Gastrocnemius medialis (tissue), 4 donors: ENCODE measurements at regions of chr10 and their contacts with region 1.

Region 1: GRCh38 chr10:70363971-70364771 is 18.3 kb downstream of the LRRC20 start:
- DNase-seq: peak; percentile 93 to 95
- ATAC-seq: peak; percentile 98 to 99
- H3K4me3 ChIP-seq: peak overlapping the region; percentile 9 to 38 (median 24)
- H3K27ac ChIP-seq: peak overlapping the region; percentile 86 to 91 (median 90)
- H3K4me1 ChIP-seq: peaks cover 12 to 15% of the 10 kb centered on the region in 2 donors
- H3K27me3 ChIP-seq: no peaks in the 10 kb centered on the region
- CTCF ChIP-seq: peak; percentile 93 to 98 (median 95)
- POLR2A ChIP-seq: peak in 1 of 2 donors; percentile 30

Region 2: DNA sequence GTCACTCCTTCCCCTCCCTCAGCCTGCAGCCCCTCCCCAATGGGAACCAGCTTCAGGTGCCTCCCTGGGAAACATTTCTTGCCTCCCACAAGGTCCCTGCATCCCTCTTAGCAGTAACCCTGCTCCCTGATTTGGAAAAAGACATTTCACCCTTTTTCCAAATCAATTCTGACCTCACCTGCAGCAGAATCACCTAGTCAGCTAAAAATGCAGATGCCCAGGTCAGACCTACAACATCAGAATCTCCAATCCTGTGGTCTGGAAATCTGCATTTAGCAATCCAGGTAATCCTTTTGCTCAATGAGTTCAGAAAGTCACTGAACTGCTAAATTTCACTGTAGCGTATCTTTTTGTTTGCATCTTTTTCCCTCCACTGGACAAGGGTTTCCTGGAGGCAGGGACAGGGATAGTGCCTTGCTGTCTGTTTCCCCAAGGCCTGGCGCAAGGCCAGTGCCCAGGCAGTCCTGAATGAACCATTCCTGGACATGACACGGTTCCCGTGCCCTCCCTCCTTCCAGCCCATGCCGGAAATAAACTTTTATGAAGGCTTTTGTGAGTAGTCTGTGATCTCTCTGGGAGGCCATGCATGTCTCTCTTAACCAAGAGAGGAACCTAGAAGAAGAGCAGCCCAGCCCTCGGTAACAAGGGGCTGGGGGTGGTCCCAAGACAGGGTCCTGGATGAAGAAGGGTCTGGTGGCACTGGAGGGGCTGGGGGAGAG is 518.4 kb before region 1 on chr10:
- in situ Hi-C with region 1: no loop called
- intact Hi-C with region 1: no loop called
- DNase-seq: peak; percentile 71 to 79
- ATAC-seq: peak; percentile 83 to 85
- H3K4me3 ChIP-seq: peak overlapping the region in 2 of 4 donors; percentile 1 to 40
- H3K27ac ChIP-seq: peak overlapping the region; percentile 81 to 91 (median 84)
- H3K4me1 ChIP-seq: peaks cover 34 to 35% of the 10 kb centered on the region in 2 donors
- H3K27me3 ChIP-seq: no peaks in the 10 kb centered on the region
- CTCF ChIP-seq: no peak
- POLR2A ChIP-seq: no peak

Region 3: GRCh38 chr10:70191972-70192305 is 172.2 kb before region 1 on chr10:
- in situ Hi-C with region 1: no loop called
- intact Hi-C with region 1: no loop called
- DNase-seq: no peak
- ATAC-seq: peak in 1 of 2 donors; percentile 33
- H3K4me3 ChIP-seq: no peak overlapping the region
- H3K27ac ChIP-seq: no peak overlapping the region
- H3K4me1 ChIP-seq: peaks cover 0 to 5% of the 10 kb centered on the region in 2 donors
- H3K27me3 ChIP-seq: no peaks in the 10 kb centered on the region
- CTCF ChIP-seq: no peak
- POLR2A ChIP-seq: no peak

Region 4: DNA sequence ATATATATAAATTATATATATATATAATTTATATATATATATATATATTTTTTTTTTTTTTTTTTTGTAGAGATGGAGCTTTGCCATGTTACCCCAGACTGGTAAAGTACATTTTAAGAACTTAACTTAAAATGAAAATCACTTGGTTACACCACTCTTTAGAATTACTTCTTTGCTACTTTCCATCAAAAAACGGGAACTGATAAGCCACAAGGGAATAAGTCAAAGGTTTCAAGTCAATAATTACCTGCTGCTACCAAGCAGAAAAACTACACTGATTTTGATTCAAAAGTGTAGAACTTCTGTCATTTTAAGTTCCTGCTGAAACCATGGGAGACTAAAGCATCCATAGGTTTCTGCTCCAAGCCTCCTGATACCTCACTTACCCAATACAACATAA is 143.1 kb before region 1 on chr10:
- in situ Hi-C with region 1: loop called (anchors 5 kb)
- intact Hi-C with region 1: loop called (anchors 1 kb)
- DNase-seq: no peak
- ATAC-seq: no peak
- H3K4me3 ChIP-seq: peak overlapping the region in 2 of 4 donors; percentile 8 to 26
- H3K27ac ChIP-seq: peak overlapping the region; percentile 20 to 64 (median 57)
- H3K4me1 ChIP-seq: peaks cover 0 to 9% of the 10 kb centered on the region in 2 donors
- H3K27me3 ChIP-seq: no peaks in the 10 kb centered on the region
- CTCF ChIP-seq: no peak
- POLR2A ChIP-seq: no peak

Region 5: DNA sequence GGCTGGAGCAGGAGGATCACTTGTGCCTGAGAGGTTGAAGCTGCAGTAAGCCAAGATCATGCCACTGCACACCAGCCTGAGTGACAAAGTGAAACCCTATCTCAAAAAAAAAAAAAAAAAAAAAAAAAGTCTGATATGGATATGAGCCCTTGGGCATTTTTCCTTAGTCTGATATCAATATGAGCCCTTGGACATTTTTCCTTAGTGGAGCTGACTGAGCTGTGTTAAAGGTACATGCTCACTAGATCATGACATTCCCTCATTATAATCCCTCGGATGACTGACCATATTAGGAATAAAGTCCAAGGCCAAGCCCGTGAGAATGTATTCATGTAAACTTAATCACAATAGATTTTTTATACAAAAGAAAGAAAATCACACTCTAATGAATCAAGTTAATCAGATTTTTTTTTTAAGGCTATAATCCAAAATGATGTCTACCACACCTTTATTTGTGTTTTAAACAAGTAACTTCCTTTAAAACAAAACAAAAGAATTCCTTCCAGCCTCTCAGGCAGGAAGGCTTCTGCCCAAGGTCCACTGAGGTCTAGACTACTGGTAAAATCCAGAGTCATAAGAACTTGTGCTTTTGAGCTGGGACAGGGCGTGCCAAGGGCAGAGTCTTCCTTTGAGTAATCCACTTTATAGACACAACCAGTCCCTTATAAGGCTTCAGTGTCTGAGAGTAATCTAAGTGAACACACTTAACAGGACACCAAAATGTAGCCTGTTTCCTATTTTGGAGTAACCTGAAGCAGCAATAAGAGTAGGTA is 136.4 kb before region 1 on chr10:
- in situ Hi-C with region 1: loop called (anchors 5 kb)
- intact Hi-C with region 1: no loop called
- DNase-seq: no peak
- ATAC-seq: no peak
- H3K4me3 ChIP-seq: no peak overlapping the region
- H3K27ac ChIP-seq: peak overlapping the region; percentile 11 to 25 (median 18)
- H3K4me1 ChIP-seq: peaks cover 18 to 19% of the 10 kb centered on the region in 2 donors
- H3K27me3 ChIP-seq: no peaks in the 10 kb centered on the region
- CTCF ChIP-seq: no peak
- POLR2A ChIP-seq: no peak

Region 6: GRCh38 chr10:70233109-70233938 is 130.8 kb before region 1 on chr10 and contains the start of gene PPA1:
- in situ Hi-C with region 1: loop called in 3 of 4 experiments (anchors 5 kb)
- intact Hi-C with region 1: loop called (anchors 1 kb)
- DNase-seq: peak; percentile 97 to 98
- ATAC-seq: peak; percentile 88 to 90
- H3K4me3 ChIP-seq: peak within 1 kb of the TSS; percentile 66 to 92 (median 86)
- H3K27ac ChIP-seq: peak within 1 kb of the TSS; percentile 83 to 92 (median 90)
- H3K4me1 ChIP-seq: peaks cover 12 to 16% of the 10 kb centered on the region in 2 donors
- H3K27me3 ChIP-seq: no peaks in the 10 kb centered on the region
- CTCF ChIP-seq: peak in 3 of 5 experiments; percentile 12 to 46 (median 43)
- POLR2A ChIP-seq: peak; percentile 85 to 93
- total RNA-seq, gene PPA1: 73.9 to 146 (median 95.3) TPM

Region 7: GRCh38 chr10:70272925-70273316 is 91.2 kb before region 1 on chr10:
- in situ Hi-C with region 1: loop called in 2 of 4 experiments (anchors 5 to 10 kb)
- intact Hi-C with region 1: no loop called
- DNase-seq: no peak
- ATAC-seq: peak in 1 of 2 donors; percentile 24
- H3K4me3 ChIP-seq: no peak overlapping the region
- H3K27ac ChIP-seq: no peak overlapping the region
- H3K4me1 ChIP-seq: no peaks in the 10 kb centered on the region
- H3K27me3 ChIP-seq: no peaks in the 10 kb centered on the region
- CTCF ChIP-seq: peak; percentile 30 to 59 (median 52)
- POLR2A ChIP-seq: no peak

Region 8: DNA sequence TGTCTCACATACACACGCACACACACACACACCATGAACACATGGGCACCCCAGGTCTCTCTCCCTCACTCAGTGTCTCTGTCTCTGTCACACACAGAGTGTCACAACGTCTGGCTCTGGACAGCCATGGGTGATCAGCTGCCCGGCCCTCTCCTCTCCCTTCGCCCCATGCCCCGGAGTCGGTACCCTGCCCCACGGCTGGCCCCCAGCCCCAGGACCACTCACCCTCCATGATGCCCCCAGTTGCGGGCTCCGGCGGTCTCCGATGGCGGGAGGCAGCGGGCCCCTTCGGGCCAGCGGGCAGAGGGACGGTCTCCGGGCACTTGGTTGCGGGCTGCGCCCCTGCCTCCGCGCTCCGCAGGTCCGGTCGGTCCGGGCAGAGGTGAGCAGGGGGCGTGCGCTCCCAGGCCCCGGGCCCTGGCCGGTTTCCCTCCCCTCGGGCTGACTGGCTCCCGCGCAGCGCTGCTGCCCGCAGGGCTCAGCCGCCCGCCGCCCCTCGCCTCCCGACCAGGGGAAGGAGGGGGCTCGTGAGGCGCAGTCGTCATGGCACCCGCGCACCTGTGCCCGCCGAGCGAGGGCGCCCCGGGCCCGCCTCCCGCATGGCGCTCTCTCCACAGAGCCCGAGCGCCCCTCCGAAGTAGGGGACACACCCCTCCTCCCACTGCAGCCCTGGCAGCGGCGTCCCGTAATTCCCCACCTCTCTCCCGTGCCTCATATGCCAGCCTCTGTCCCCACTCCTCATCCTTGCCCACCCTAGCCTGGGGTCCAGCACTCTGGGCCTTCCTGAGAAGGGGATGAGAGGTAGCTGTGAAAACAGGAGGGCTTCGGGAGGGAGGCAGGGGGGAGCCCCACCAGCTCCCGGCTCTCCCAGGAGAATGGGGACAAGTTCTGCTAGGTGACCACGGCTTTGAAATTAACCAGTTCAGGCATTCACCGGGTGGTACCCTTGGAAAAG is 80.4 kb before region 1 on chr10 and contains the start of gene NPFFR1:
- in situ Hi-C with region 1: loop called in 1 of 4 experiments (anchors 10 kb)
- intact Hi-C with region 1: loop called (anchors 5 kb)
- DNase-seq: no peak
- ATAC-seq: no peak
- H3K4me3 ChIP-seq: peak within 1 kb of the TSS; percentile 37 to 43 (median 39)
- H3K27ac ChIP-seq: no peak within 1 kb of the TSS
- H3K4me1 ChIP-seq: peaks cover 3 to 4% of the 10 kb centered on the region in 2 donors
- H3K27me3 ChIP-seq: peaks cover 27 to 33% (median 27%) of the 10 kb centered on the region in 3 donors
- CTCF ChIP-seq: peak in 2 of 5 experiments; percentile 11 to 37
- POLR2A ChIP-seq: no peak
- total RNA-seq, gene NPFFR1: 0.03 TPM in 1 of 4 donors, not detected in the others

Region 9: DNA sequence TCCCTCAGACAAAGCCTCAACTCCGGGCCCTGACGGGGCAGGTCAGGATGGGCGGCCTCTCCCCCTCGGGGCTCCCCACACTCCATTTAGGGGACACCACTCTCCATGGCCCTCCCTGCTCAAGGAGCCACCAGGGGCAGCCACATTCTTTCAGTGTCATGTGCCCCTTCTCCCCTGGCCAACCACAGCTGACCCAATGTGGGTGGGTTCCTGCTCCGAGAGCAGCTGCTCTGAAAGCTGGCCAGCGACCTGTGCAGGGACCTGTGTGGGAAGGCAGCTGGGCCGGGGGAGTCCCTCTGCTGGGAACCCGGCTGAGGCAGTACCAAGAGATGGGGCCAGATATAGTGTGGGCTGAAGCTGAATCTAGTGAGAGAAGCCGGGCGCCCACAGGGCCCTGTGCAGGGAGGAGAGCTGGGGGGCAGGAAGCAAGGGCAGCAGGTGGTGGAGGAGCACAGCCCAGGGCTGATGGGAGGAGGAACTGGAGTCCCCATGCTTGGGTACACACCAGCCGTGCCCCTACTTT is 39.8 kb before region 1 on chr10:
- in situ Hi-C with region 1: no loop called
- intact Hi-C with region 1: loop called (anchors 5 kb)
- DNase-seq: peak in 1 of 2 donors; percentile 57
- ATAC-seq: peak; percentile 25 to 41
- H3K4me3 ChIP-seq: no peak overlapping the region
- H3K27ac ChIP-seq: peak overlapping the region; percentile 68 to 79 (median 75)
- H3K4me1 ChIP-seq: peaks cover 27 to 55% of the 10 kb centered on the region in 2 donors
- H3K27me3 ChIP-seq: no peaks in the 10 kb centered on the region
- CTCF ChIP-seq: no peak
- POLR2A ChIP-seq: peak in 1 of 2 donors; percentile 11